Left cardiac atrium (tissue), 4 donors: ENCODE measurements at regions of chr10 and their contacts with region 1.

Region 1: DNA sequence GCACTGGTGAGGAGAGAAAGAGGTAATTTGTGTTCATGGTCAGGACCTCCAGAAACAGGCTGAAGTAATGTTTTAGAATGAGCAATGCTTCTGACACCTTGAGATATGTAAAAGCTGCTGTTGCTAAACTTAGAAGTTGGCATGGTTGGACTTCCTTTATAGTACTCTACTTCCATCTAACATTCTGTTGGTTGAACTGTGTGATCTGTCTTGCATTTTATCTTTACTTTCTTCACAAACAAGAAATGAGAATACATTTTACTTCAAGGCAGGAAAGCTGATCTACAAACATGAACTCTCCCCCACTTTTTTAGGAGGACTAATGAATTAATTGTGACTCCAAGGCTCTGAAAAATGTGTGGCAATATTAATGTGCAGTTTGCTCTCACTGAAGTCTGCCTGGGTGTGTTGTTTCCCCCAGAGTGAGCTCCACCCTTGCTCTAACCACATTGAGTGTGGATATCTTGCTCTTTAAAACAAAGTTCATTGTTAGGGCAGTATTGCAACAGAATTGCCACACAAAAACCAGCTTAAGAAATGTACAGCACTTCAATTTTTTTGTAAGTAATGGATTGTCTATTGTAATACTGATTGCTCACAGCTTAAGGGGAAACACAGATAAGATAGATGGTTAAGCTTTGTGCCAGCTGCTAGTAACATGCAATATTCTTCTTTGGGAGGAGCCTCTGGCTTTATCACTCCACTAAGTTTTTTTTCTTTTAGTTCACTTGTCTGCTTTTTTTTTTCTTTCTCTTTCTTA is 69.0 kb downstream of the ADD3 start:
- DNase-seq: peak; percentile 49
- ATAC-seq: peak; percentile 79 to 88

Region 2: GRCh38 chr10:109996766-109997171 is 80.0 kb before region 1 on chr10:
- intact Hi-C with region 1: no loop called
- DNase-seq: no peak
- ATAC-seq: no peak

Region 3: GRCh38 chr10:110007701-110008517 is 68.8 kb before region 1 on chr10 and contains the start of gene ADD3:
- intact Hi-C with region 1: loop called in 1 of 2 experiments (anchors 5 kb)
- DNase-seq: peak; percentile 97
- ATAC-seq: peak; percentile 93 to 94
- total RNA-seq, gene ADD3: 75.2 to 125 TPM

Region 4: GRCh38 chr10:110395725-110396651 is 319.2 kb after region 1 on chr10:
- intact Hi-C with region 1: no loop called
- DNase-seq: peak; percentile 48
- ATAC-seq: peak; percentile 45 to 65